ENCODE measurements at regions of chr3 and their contacts with region 1.

Region 1: GRCh38 chr3:98766924-98767323 is 3.8 kb downstream of the ST3GAL6 start:
- DNase-seq: no peak
- ATAC-seq: no peak
- H3K4me3 ChIP-seq: no peak overlapping the region
- H3K27ac ChIP-seq: no peak overlapping the region
- H3K4me1 ChIP-seq: peaks cover 4% of the 10 kb centered on the region
- H3K27me3 ChIP-seq: no peaks in the 10 kb centered on the region; the same call in 1 of the 2 replicates
- CTCF ChIP-seq: no peak
- POLR2A ChIP-seq: no peak
- RAD21 ChIP-seq: no peak

Region 2: GRCh38 chr3:98440283-98440942 is 326.5 kb before region 1 on chr3:
- CTCF ChIA-PET with region 1: no interaction called
- POLR2A ChIA-PET with region 1: no interaction called
- dilution Hi-C with region 1: no loop called
- in situ Hi-C with region 1: no loop called
- intact Hi-C with region 1: no loop called
- DNase-seq: no peak
- ATAC-seq: no peak
- H3K4me3 ChIP-seq: no peak overlapping the region
- H3K27ac ChIP-seq: no peak overlapping the region
- H3K4me1 ChIP-seq: no peaks in the 10 kb centered on the region
- H3K27me3 ChIP-seq: no peaks in the 10 kb centered on the region
- CTCF ChIP-seq: no peak
- POLR2A ChIP-seq: no peak
- RAD21 ChIP-seq: no peak

Region 3: GRCh38 chr3:98784666-98785600 is 18.0 kb after region 1 on chr3:
- CTCF ChIA-PET with region 1: no interaction called
- POLR2A ChIA-PET with region 1: no interaction called
- dilution Hi-C with region 1: no loop called
- in situ Hi-C with region 1: no loop called
- intact Hi-C with region 1: loop called (anchors 1 kb)
- DNase-seq: peak; percentile 94
- ATAC-seq: peak; percentile 89
- H3K4me3 ChIP-seq: no peak overlapping the region
- H3K27ac ChIP-seq: peak overlapping the region; percentile 75; the same call in 1 of the 2 replicates
- H3K4me1 ChIP-seq: peaks cover 10% of the 10 kb centered on the region
- H3K27me3 ChIP-seq: no peaks in the 10 kb centered on the region
- CTCF ChIP-seq: no peak
- POLR2A ChIP-seq: no peak
- RAD21 ChIP-seq: no peak